PC-9 (cell line): ENCODE measurements at regions of chr18 and their contacts with region 1.

Region 1: GRCh38 chr18:32470713-32471633 is at the start of gene GAREM1:
- DNase-seq: peak; percentile 87 to 92
- H3K4me3 ChIP-seq: peak within 1 kb of the TSS; percentile 77
- H3K27ac ChIP-seq: peak within 1 kb of the TSS; percentile 30
- H3K4me1 ChIP-seq: peaks cover 20% of the 10 kb centered on the region
- H3K27me3 ChIP-seq: no peaks in the 10 kb centered on the region
- CTCF ChIP-seq: peak; percentile 44
- total RNA-seq, gene GAREM1: 6.1 and 10.2 TPM in 2 replicates

Region 2: GRCh38 chr18:31942999-31943865 is 527.7 kb before region 1 on chr18 and contains the start of gene TRAPPC8:
- CTCF ChIA-PET with region 1: no interaction called
- POLR2A ChIA-PET with region 1: no interaction called
- intact Hi-C with region 1: no loop called
- DNase-seq: peak; percentile 86 to 88
- H3K4me3 ChIP-seq: peak within 1 kb of the TSS; percentile 90
- H3K27ac ChIP-seq: peak within 1 kb of the TSS; percentile 80
- H3K4me1 ChIP-seq: peaks cover 11% of the 10 kb centered on the region
- H3K27me3 ChIP-seq: no peaks in the 10 kb centered on the region
- CTCF ChIP-seq: no peak
- total RNA-seq, gene TRAPPC8: 20.9 and 21.7 TPM in 2 replicates

Region 3: DNA sequence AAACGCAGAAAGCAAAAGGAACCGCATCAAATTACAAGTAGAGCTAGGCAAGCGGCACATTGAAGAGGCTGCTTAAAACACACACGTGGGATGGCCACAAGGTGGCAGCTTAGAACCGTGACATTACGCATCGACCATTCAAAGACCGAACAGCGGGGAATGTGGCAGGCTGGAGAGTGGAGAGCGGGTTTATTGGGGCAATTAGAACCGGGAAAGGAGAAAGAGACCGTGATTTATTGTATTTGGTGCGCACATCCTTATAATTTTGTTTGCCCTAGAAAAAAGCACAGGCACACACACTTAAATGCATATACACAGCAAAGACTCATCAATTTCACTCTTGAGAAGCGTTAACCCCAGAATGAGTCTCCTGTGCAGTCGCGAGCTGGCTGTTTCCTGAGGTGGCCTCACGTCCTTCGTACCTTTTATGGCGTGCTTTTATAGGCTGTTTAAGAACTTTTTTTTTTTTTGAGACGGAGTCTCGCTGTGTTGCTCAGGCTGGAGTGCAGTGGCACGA is 312.8 kb before region 1 on chr18:
- CTCF ChIA-PET with region 1: interaction called, 14 read pairs
- POLR2A ChIA-PET with region 1: no interaction called
- intact Hi-C with region 1: no loop called
- DNase-seq: peak; percentile 53 to 55
- H3K4me3 ChIP-seq: no peak overlapping the region
- H3K27ac ChIP-seq: no peak overlapping the region
- H3K4me1 ChIP-seq: no peaks in the 10 kb centered on the region
- H3K27me3 ChIP-seq: no peaks in the 10 kb centered on the region
- CTCF ChIP-seq: peak; percentile 74

Region 4: DNA sequence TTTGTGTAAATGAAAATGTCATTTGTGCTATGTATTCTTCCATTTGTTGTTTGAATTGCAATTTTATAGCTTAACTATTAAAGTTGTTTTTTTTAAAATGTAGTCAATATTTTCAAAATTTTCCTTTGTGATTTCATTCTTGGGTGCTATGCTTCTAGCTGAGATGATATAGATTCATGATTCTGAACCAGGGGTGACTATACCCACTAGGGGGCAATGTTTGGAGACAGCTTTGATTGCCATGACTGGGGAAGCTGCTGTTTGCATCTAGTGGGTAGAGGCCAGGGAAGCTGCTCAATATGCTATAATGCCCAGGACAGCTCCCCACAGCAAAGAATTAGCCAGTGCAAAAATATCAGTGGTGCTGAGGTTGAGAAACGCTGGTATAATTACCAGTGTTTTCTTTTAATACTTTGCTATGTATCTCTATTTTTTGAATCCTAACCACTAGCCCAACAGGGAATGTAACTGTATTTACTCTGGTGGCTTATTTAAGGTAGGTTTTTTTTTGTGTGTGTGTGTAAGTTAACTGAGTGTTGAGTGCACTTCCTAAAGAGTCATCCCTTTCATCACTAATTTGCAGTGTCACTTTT is 181.4 kb before region 1 on chr18:
- CTCF ChIA-PET with region 1: interaction called, 30 read pairs
- POLR2A ChIA-PET with region 1: no interaction called
- intact Hi-C with region 1: loop called (anchors 1 kb)
- DNase-seq: peak in 1 of 2 experiments; percentile 33
- H3K4me3 ChIP-seq: no peak overlapping the region
- H3K27ac ChIP-seq: no peak overlapping the region
- H3K4me1 ChIP-seq: no peaks in the 10 kb centered on the region
- H3K27me3 ChIP-seq: no peaks in the 10 kb centered on the region
- CTCF ChIP-seq: peak; percentile 73

Region 5: GRCh38 chr18:32373995-32374394 is 97.0 kb before region 1 on chr18:
- CTCF ChIA-PET with region 1: interaction called, 4 read pairs
- POLR2A ChIA-PET with region 1: interaction called, 4 read pairs
- intact Hi-C with region 1: loop called (anchors 1 kb)
- DNase-seq: peak; percentile 32 to 78
- H3K4me3 ChIP-seq: peak overlapping the region; percentile 6; the same call in 1 of the 2 replicates
- H3K27ac ChIP-seq: peak overlapping the region; percentile 97
- H3K4me1 ChIP-seq: peaks cover 73% of the 10 kb centered on the region
- H3K27me3 ChIP-seq: no peaks in the 10 kb centered on the region
- CTCF ChIP-seq: no peak

Region 6: DNA sequence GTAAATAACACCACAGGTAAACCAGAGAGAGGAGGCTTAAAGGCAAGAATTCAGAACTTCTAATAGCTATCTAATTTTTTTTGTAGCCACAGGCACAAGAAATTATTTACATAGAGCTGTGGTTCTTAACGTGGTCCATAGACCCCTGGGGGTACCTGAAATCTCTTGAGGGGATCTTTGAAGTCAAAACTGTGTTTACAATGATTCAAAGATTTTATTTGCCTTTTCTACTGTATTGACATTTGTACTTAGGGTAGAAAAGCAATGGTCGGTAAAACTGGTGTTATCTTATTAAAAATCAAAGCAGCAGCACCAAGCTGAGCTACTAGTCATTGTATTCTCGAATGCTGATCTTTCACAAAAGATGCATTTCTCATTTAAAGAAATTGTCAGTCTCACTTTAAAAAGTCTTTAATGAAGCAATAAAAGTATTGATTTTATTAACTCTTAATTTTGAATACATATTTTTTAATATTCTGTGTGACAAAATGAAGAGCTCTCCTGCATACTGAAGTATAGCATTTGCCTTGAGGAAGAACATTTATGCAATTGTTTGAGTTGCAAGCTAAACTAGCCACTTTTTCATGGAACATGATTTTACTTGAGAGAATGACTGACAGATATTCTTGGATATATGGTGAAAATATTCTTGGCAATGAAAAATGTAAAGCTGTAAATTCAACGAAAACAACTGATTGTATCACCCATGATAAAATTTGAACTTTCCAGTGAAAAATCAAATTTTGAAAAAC is 327.4 kb after region 1 on chr18:
- CTCF ChIA-PET with region 1: no interaction called
- POLR2A ChIA-PET with region 1: interaction called, 10 read pairs
- intact Hi-C with region 1: no loop called
- DNase-seq: no peak
- H3K4me3 ChIP-seq: no peak overlapping the region
- H3K27ac ChIP-seq: no peak overlapping the region
- H3K4me1 ChIP-seq: no peaks in the 10 kb centered on the region
- H3K27me3 ChIP-seq: no peaks in the 10 kb centered on the region
- CTCF ChIP-seq: no peak